ENCODE measurements at regions of chr1 and their contacts with region 1.

Region 1: GRCh38 chr1:83931658-83932253 is 67.2 kb downstream of the TTLL7 start:
- DNase-seq: peak in 4 of 7 donors; percentile 16 to 34 (median 27)
- H3K4me3 ChIP-seq: no peak overlapping the region
- H3K27ac ChIP-seq: no peak overlapping the region
- H3K4me1 ChIP-seq: no peaks in the 10 kb centered on the region
- H3K27me3 ChIP-seq: no peaks in the 10 kb centered on the region
- CTCF ChIP-seq: peak; percentile 55 to 81 (median 73)
- POLR2A ChIP-seq: no peak

Region 2: GRCh38 chr1:83849191-83850061 is 82.3 kb before region 1 on chr1:
- intact Hi-C with region 1: no loop called
- DNase-seq: no peak
- H3K4me3 ChIP-seq: no peak overlapping the region
- H3K27ac ChIP-seq: no peak overlapping the region
- H3K4me1 ChIP-seq: no peaks in the 10 kb centered on the region
- H3K27me3 ChIP-seq: no peaks in the 10 kb centered on the region
- CTCF ChIP-seq: no peak
- POLR2A ChIP-seq: no peak

Region 3: DNA sequence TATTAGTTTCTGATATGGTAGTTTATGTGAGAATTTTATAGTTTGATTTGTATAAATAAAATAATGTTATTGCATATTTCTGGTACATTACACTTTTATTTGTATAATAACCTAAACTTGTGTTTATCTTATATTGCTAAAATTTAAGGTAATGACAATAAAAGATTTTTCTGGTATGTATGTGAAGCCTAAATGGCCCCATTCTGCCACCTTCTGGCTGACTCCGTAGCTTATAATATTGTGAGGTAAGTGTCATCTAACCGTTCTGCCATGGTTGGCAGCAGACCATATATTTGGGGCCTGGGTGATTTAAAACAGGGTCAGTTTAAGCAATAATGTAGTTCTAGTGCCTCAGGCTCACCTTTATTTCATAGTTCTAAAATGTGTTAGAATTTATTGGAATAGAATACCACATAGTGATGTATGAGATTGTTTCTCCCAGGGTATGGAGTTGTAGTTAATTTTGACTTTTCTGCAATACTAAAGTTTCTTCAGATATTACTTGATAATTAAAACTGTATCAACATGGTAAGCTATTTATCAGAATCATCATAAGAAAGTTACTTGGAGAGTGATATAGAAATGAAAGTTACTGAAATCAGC is 191.1 kb after region 1 on chr1:
- intact Hi-C with region 1: loop called (anchors 2 to 10 kb)
- DNase-seq: peak; percentile 32 to 76 (median 53)
- H3K4me3 ChIP-seq: no peak overlapping the region
- H3K27ac ChIP-seq: no peak overlapping the region
- H3K4me1 ChIP-seq: no peaks in the 10 kb centered on the region
- H3K27me3 ChIP-seq: no peaks in the 10 kb centered on the region
- CTCF ChIP-seq: peak; percentile 45 to 76 (median 66)
- POLR2A ChIP-seq: no peak